HepG2 (cell line): ENCODE measurements at regions of chr4 and their contacts with region 1.

Region 1: GRCh38 chr4:157459785-157460184 is 239.3 kb downstream of the GRIA2 start:
- DNase-seq: peak; percentile 56
- ATAC-seq: peak; percentile 99
- H3K4me3 ChIP-seq: peak overlapping the region in 2 of 3 experiments; percentile 18 to 42; a peak in 2 of 6 replicates
- H3K27ac ChIP-seq: peak overlapping the region; percentile 61
- H3K4me1 ChIP-seq: peaks cover 17% of the 10 kb centered on the region
- H3K27me3 ChIP-seq: no peaks in the 10 kb centered on the region
- CTCF ChIP-seq: no peak
- EP300 ChIP-seq: peak in 1 of 2 experiments; percentile 73; a peak in 2 of 4 replicates
- POLR2A ChIP-seq: no peak
- RAD21 ChIP-seq: no peak

Region 2: GRCh38 chr4:157220371-157220881 is 239.4 kb before region 1 on chr4 and contains the start of gene GRIA2:
- CTCF ChIA-PET with region 1: no interaction called
- POLR2A ChIA-PET with region 1: no interaction called
- in situ Hi-C with region 1: no loop called
- intact Hi-C with region 1: loop called (anchors 5 kb)
- DNase-seq: peak; percentile 1
- ATAC-seq: peak; percentile 98
- H3K4me3 ChIP-seq: no peak within 1 kb of the TSS
- H3K27ac ChIP-seq: no peak within 1 kb of the TSS
- H3K4me1 ChIP-seq: no peaks in the 10 kb centered on the region
- H3K27me3 ChIP-seq: peaks cover 0 to 4% of the 10 kb centered on the region in 2 experiments; a peak in 2 of 5 replicates
- CTCF ChIP-seq: no peak
- EP300 ChIP-seq: no peak
- POLR2A ChIP-seq: no peak
- RAD21 ChIP-seq: no peak
- total RNA-seq, gene GRIA2: not detected in 2 replicates

Region 3: DNA sequence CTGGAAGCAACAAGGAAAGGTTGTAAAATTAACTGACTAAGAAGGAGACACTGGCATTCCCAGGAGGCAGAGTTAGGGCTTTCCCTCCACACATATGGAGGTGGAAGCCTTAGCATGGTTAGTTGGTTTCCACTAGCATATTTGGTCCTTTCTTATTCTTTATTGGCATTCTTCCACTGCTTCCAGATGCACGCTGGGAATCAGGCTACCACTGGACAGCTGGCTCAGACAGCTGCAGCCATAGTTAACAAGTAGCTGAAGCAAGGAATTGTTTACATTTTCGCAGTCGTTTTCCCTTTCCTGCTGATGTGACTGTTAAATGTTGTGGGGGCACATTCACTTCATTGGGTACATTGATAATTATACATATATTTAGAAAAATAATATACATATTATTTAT is 70.0 kb before region 1 on chr4:
- CTCF ChIA-PET with region 1: no interaction called
- POLR2A ChIA-PET with region 1: no interaction called
- in situ Hi-C with region 1: no loop called
- intact Hi-C with region 1: loop called (anchors 10 kb)
- DNase-seq: no peak
- ATAC-seq: no peak
- H3K4me3 ChIP-seq: no peak overlapping the region
- H3K27ac ChIP-seq: no peak overlapping the region
- H3K4me1 ChIP-seq: no peaks in the 10 kb centered on the region
- H3K27me3 ChIP-seq: no peaks in the 10 kb centered on the region
- CTCF ChIP-seq: no peak
- EP300 ChIP-seq: no peak
- POLR2A ChIP-seq: no peak
- RAD21 ChIP-seq: no peak

Region 4: DNA sequence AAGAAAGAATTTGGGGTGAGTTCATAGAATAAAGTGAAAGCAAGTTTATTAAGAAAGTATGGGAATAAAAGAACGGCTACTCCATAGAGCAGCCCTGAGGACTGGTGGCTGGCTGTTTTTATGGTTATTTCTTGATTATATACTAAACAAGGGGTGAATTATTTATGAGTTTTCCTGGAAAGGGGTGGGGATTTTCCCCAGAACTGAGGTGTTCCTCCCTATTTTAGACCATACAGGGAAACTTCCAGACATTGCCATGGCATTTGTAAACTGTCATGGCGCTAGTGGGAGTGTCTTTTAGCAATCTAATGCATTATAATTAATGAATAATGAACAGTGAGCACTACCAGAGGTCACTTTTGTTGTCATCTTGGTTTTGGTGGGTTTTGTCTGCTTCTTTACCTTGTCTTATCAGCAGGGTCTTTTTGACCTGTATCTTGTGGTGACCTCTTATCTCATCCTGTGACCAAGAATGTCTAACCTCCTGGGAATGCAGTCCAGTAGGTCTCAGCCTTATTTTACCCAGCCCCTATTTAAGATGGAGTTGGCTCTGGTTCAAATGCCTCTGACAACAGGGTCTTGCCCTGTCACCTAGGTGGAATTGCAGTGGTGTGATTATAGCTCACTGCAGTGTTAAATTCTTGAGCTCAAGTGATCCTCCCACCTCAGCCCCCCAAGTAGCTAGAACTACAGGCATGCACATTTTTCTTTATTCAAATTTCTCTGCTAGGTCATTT is 1670.2 kb after region 1 on chr4:
- CTCF ChIA-PET with region 1: no interaction called
- POLR2A ChIA-PET with region 1: no interaction called
- in situ Hi-C with region 1: no loop called
- intact Hi-C with region 1: loop called (anchors 5 kb)
- DNase-seq: no peak
- ATAC-seq: no peak
- H3K4me3 ChIP-seq: no peak overlapping the region
- H3K27ac ChIP-seq: no peak overlapping the region
- H3K4me1 ChIP-seq: peaks cover 20% of the 10 kb centered on the region
- H3K27me3 ChIP-seq: no peaks in the 10 kb centered on the region
- CTCF ChIP-seq: no peak
- EP300 ChIP-seq: no peak
- POLR2A ChIP-seq: no peak
- RAD21 ChIP-seq: no peak